ENCODE measurements at regions of chr18 and their contacts with region 1.

Region 1: DNA sequence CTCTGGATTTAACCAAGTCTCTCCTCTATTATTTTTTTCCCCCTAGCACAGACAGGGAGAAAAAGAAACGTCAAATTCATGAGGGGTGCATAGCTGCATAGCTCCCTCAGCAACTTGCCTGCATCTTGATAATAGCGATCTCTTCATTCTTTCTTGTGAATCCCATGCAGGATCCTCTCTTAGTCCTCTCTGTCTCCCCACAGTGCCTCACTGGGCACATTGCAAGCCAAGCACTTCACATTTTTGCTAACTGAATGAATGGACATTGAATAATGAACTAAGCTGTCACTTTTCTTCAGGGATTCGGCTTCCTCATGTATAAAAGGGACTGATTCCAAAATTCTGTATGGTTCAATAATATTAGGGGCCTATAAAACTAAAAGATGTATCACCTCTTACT is 2.9 kb upstream of the EPB41L3 start:
- DNase-seq: peak; percentile 26
- H3K4me3 Mint-ChIP-seq: no peak overlapping the region
- H3K27ac Mint-ChIP-seq: no peak overlapping the region
- H3K4me1 Mint-ChIP-seq: no peaks in the 10 kb centered on the region
- H3K27me3 Mint-ChIP-seq: peaks cover 41% of the 10 kb centered on the region
- CTCF ChIP-seq: no peak

Region 2: GRCh38 chr18:5073026-5073944 is 473.4 kb before region 1 on chr18:
- CTCF ChIA-PET with region 1: no interaction called
- POLR2A ChIA-PET with region 1: no interaction called
- intact Hi-C with region 1: loop called (anchors 5 kb)
- DNase-seq: no peak
- H3K4me3 Mint-ChIP-seq: no peak overlapping the region
- H3K27ac Mint-ChIP-seq: no peak overlapping the region
- H3K4me1 Mint-ChIP-seq: no peaks in the 10 kb centered on the region
- H3K27me3 Mint-ChIP-seq: no peaks in the 10 kb centered on the region
- CTCF ChIP-seq: peak; percentile 63

Region 3: DNA sequence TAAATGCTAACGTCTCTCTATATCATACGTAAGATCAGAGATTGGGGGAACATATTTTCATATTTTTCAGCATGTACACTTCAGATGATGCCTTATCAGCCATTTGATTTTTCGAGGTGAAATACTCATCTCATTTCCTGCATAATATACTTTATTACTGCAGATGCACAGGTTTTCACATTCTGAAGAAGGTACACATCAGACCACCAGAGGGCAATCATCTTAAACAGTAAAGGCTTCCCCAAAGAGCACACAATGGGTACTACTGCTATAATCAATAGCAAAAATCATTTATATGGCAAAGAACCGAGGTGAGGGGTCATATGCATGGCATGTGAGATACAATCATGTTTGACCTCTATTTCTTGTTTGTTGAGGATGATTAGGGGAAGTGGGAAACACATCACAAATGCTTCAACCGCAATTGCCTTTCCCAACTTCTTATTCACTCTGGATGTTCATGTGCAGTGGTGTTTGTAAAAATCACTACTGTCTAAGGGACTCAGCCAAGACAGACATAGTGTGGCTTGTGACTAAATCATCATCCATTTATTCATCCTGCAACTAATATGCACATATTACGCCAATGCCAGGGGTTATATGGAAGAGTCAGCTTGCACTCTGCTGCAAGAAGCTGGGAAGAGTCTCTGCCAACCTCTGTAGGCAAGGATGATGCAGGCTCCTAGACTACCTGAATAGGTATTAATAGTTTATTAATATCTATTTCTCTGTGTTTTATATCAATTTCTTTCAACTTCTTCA is 121.6 kb before region 1 on chr18:
- CTCF ChIA-PET with region 1: interaction called, 12 read pairs
- POLR2A ChIA-PET with region 1: no interaction called
- intact Hi-C with region 1: loop called (anchors 10 kb)
- DNase-seq: peak; percentile 30
- H3K4me3 Mint-ChIP-seq: no peak overlapping the region
- H3K27ac Mint-ChIP-seq: no peak overlapping the region
- H3K4me1 Mint-ChIP-seq: no peaks in the 10 kb centered on the region
- H3K27me3 Mint-ChIP-seq: peaks cover 66% of the 10 kb centered on the region
- CTCF ChIP-seq: peak; percentile 38

Region 4: GRCh38 chr18:5746844-5747243 is 200.2 kb after region 1 on chr18:
- CTCF ChIA-PET with region 1: no interaction called
- POLR2A ChIA-PET with region 1: no interaction called
- intact Hi-C with region 1: no loop called
- DNase-seq: no peak
- H3K4me3 Mint-ChIP-seq: no peak overlapping the region
- H3K27ac Mint-ChIP-seq: no peak overlapping the region
- H3K4me1 Mint-ChIP-seq: no peaks in the 10 kb centered on the region
- H3K27me3 Mint-ChIP-seq: peaks cover 49% of the 10 kb centered on the region
- CTCF ChIP-seq: no peak